K562 (cell line): ENCODE measurements at regions of chr9 and their contacts with region 1.

Region 1: DNA sequence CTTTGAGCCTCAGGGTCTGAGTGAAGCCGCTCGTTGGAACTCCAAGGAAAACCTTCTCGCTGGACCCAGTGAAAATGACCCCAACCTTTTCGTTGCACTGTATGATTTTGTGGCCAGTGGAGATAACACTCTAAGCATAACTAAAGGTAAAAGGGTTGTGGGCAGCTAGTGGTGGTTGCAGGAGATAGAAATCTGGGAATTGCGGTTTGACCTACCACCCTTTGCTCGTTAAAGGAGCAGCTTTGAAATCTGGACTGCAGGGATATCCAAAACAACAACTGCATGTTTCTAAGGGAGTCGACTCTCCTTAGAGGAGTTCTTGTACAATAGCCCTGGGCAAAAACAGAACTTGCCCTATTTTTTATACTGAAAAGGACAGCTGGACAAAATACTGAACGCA is 19.0 kb downstream of the ABL1 start:
- DNase-seq: peak; percentile 84 to 88 (median 87)
- ATAC-seq: peak; percentile 80
- H3K4me3 ChIP-seq: no peak overlapping the region
- H3K27ac ChIP-seq: no peak overlapping the region
- H3K4me1 ChIP-seq: no peaks in the 10 kb centered on the region; a peak in 1 of 5 replicates
- H3K27me3 ChIP-seq: no peaks in the 10 kb centered on the region
- CTCF ChIP-seq: no peak
- EP300 ChIP-seq: no peak
- POLR2A ChIP-seq: no peak
- RAD21 ChIP-seq: no peak

Region 2: DNA sequence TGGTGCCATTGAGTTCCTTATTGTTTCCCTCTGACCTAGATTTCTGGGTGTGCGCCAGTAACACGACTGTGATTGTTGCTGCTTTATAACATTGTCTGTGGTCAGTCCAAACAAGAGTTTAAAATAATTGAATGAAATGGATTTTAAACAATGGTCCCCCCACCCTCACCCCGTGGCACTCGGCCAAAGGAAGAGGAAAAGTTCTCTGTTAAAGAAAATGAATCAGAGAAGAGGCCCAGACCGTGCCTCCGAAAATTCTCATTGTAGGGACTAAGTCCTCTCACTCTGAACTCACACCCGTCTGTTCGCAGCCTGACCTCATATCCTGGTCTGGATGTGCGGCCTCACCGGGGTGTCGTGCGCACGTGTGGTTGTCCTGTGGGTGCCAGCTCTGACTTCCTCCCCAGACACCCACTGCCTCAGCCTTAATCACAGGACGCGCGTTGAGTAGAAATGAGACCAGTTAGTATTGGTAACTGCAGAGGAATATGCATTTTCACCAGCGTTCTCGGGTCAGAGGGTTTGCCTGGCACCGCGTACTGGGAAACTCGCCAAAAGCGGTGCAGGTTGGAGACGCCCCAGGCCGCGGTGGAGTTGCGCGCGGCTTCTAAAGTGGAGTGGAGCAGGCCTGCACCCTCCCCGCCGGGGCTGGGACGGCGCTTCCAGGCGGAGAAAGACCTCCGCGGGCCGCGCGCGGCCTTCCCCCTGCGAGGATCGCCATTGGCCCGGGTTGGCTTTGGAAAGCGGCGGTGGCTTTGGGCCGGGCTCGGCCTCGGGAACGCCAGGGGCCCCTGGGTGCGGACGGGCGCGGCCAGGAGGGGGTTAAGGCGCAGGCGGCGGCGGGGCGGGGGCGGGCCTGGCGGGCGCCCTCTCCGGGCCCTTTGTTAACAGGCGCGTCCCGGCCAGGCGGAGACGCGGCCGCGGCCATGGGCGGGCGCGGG is 19.5 kb before region 1 on chr9 and contains the start of gene ABL1:
- CTCF ChIA-PET with region 1: no interaction called
- POLR2A ChIA-PET with region 1: interaction called, 99 read pairs
- in situ Hi-C with region 1: no loop called
- intact Hi-C with region 1: no loop called
- DNase-seq: peak; percentile 70 to 94 (median 90)
- ATAC-seq: peak; percentile 63
- H3K4me3 ChIP-seq: peak within 1 kb of the TSS; percentile 17
- H3K27ac ChIP-seq: no peak within 1 kb of the TSS
- H3K4me1 ChIP-seq: peaks cover 0 to 11% of the 10 kb centered on the region in 2 experiments; a peak in 2 of 5 replicates
- H3K27me3 ChIP-seq: no peaks in the 10 kb centered on the region
- CTCF ChIP-seq: no peak
- EP300 ChIP-seq: no peak
- POLR2A ChIP-seq: no peak
- RAD21 ChIP-seq: no peak
- polyA plus RNA-seq, gene ABL1: 1.5 to 1.6 TPM

Region 3: DNA sequence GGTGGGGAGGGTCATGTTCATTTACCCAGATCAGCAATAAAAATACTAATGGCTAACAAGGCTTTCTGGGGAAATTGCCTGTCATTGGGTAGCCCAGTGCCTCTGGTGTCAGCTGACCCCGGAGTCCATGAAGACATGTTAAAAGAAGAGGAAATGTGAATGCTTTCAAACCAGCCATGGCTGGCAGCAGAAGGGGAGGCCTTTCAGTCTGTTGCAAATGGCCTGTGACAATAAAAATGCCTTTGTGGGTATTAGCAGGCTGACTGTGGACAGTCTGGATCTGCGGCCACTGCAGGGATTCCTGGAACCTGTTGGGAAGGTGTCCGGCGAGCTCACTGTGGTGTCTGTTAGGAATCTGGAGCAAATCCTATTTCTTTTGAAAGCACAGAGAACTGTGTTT is 11.5 kb before region 1 on chr9:
- CTCF ChIA-PET with region 1: interaction called, 4 read pairs
- POLR2A ChIA-PET with region 1: interaction called, 99 read pairs
- in situ Hi-C with region 1: no loop called
- intact Hi-C with region 1: loop called (anchors 1 kb)
- DNase-seq: peak in 1 of 4 experiments; percentile 37
- ATAC-seq: no peak
- H3K4me3 ChIP-seq: no peak overlapping the region
- H3K27ac ChIP-seq: no peak overlapping the region
- H3K4me1 ChIP-seq: peaks cover 26 to 29% of the 10 kb centered on the region in 2 experiments
- H3K27me3 ChIP-seq: no peaks in the 10 kb centered on the region
- CTCF ChIP-seq: no peak
- EP300 ChIP-seq: no peak
- POLR2A ChIP-seq: no peak
- RAD21 ChIP-seq: no peak

Region 4: GRCh38 chr9:130949188-130950038 is 95.3 kb after region 1 on chr9:
- CTCF ChIA-PET with region 1: no interaction called
- POLR2A ChIA-PET with region 1: no interaction called
- in situ Hi-C with region 1: no loop called
- intact Hi-C with region 1: no loop called
- DNase-seq: peak in 1 of 4 experiments; percentile 52
- ATAC-seq: no peak
- H3K4me3 ChIP-seq: no peak overlapping the region
- H3K27ac ChIP-seq: no peak overlapping the region
- H3K4me1 ChIP-seq: peaks cover 5 to 6% of the 10 kb centered on the region in 2 experiments; a peak in 3 of 5 replicates
- H3K27me3 ChIP-seq: peaks cover 21 to 62% of the 10 kb centered on the region in 2 experiments
- CTCF ChIP-seq: no peak
- EP300 ChIP-seq: no peak
- POLR2A ChIP-seq: no peak
- RAD21 ChIP-seq: no peak

Region 5: DNA sequence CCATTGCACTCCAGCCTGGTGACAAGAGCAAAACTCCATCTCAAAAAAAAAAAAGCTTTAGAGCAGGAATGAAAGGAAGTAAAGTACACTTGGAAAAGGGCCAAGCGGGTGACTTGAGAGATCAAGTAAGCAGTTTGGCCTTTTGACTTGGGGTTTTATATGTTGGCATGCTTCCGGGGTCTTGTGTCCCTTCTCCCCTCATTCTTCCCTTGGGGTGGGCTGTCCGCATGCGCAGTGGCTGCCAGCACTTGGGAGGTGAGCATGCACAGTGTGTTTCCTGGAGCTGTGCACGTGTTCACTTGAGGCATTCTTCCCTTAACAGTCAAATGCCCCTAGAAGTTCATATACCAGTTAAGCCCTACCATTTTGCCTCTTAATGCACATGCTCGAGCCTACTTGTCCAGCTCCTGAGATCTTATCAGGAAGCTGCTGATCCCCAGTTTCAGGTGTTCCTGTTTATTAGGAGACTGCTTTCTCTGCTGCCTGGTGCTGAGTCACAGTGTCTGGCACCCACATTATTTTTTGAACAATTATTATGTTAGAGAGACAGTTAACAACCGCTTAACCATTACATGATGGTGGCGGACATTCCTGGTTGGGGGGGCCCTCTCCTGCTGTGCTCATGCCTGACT is 507.2 kb after region 1 on chr9:
- CTCF ChIA-PET with region 1: no interaction called
- POLR2A ChIA-PET with region 1: no interaction called
- in situ Hi-C with region 1: no loop called
- intact Hi-C with region 1: no loop called
- DNase-seq: peak in 2 of 4 experiments; percentile 34 to 43
- ATAC-seq: peak; percentile 61
- H3K4me3 ChIP-seq: no peak overlapping the region
- H3K27ac ChIP-seq: peak overlapping the region; percentile 24; the same call in 1 of the 3 replicates
- H3K4me1 ChIP-seq: peaks cover 15 to 18% of the 10 kb centered on the region in 2 experiments
- H3K27me3 ChIP-seq: no peaks in the 10 kb centered on the region
- CTCF ChIP-seq: no peak
- EP300 ChIP-seq: no peak; the same call in 1 of the 2 replicates
- POLR2A ChIP-seq: no peak
- RAD21 ChIP-seq: no peak

Region 6: GRCh38 chr9:132411091-132411508 is 1557.0 kb after region 1 on chr9:
- CTCF ChIA-PET with region 1: no interaction called
- POLR2A ChIA-PET with region 1: no interaction called
- in situ Hi-C with region 1: no loop called
- intact Hi-C with region 1: no loop called
- DNase-seq: peak; percentile 71 to 77 (median 76)
- ATAC-seq: peak; percentile 87
- H3K4me3 ChIP-seq: no peak overlapping the region
- H3K27ac ChIP-seq: no peak overlapping the region
- H3K4me1 ChIP-seq: peaks cover 13 to 17% of the 10 kb centered on the region in 2 experiments; a peak in 4 of 5 replicates
- H3K27me3 ChIP-seq: peaks cover 23 to 31% of the 10 kb centered on the region in 2 experiments
- CTCF ChIP-seq: peak; percentile 85 to 93 (median 86)
- EP300 ChIP-seq: no peak
- POLR2A ChIP-seq: no peak
- RAD21 ChIP-seq: peak; percentile 75 to 86